ENCODE measurements at regions of chr13 and their contacts with region 1.

Region 1: DNA sequence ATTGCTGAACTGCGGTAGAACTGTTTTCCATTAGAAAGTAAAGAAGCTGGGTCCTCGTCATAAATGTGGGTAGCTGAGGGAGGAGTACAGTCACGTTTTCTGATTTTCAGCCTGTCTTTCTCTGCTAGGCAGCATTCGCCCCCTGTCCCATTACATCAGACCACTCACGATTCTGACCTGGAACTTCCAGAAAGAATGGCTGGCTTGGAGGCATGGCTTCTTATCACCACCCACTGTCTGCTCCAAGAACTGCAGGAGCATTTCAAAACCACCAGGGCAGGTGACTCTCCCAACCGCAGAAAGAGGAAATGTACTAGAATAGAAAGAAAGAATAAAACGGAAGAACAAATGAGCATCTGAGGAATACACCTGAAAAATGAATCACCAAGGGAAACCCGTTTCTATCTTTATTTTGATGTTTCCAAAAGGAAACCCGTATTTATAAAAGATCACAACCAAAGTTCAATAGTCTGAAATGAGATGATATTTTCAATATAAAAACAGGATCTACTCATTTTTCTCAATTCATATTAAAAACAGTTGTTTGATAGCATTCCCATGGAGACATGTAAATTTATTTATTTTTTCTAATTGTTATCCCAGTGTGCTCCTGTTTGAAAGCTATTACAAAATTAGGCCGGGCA is 22.1 kb upstream of the POMP start:
- DNase-seq: peak in 1 of 2 donors; percentile 71
- ATAC-seq: peak; percentile 65 to 86 (median 76)
- H3K4me3 ChIP-seq: no peak overlapping the region
- H3K27ac ChIP-seq: peak overlapping the region in 6 of 10 donors; percentile 29 to 63 (median 50)
- H3K4me1 ChIP-seq: peaks cover 0 to 43% (median 20%) of the 10 kb centered on the region in 9 donors
- H3K27me3 ChIP-seq: peaks cover 0 to 4% (median 0%) of the 10 kb centered on the region in 7 donors
- CTCF ChIP-seq: peak; percentile 72 to 95 (median 89)

Region 2: GRCh38 chr13:28329395-28330158 is 307.2 kb before region 1 on chr13:
- intact Hi-C with region 1: loop called in 9 of 10 experiments (anchors 1 to 5 kb)
- DNase-seq: peak in 1 of 2 donors; percentile 43
- ATAC-seq: peak; percentile 59 to 89 (median 74)
- H3K4me3 ChIP-seq: no peak overlapping the region
- H3K27ac ChIP-seq: peak overlapping the region in 7 of 10 donors; percentile 3 to 72 (median 33)
- H3K4me1 ChIP-seq: peaks cover 6 to 53% (median 28%) of the 10 kb centered on the region in 9 donors
- H3K27me3 ChIP-seq: peaks cover 0 to 21% (median 0%) of the 10 kb centered on the region in 7 donors
- CTCF ChIP-seq: no peak

Region 3: GRCh38 chr13:28401303-28402056 is 235.3 kb before region 1 on chr13:
- intact Hi-C with region 1: loop called in 1 of 10 experiments (anchors 10 kb)
- DNase-seq: no peak
- ATAC-seq: peak in 6 of 8 donors; percentile 28 to 83 (median 68)
- H3K4me3 ChIP-seq: peak overlapping the region in 1 of 10 donors; percentile 0
- H3K27ac ChIP-seq: peak overlapping the region in 7 of 10 donors; percentile 3 to 70 (median 52)
- H3K4me1 ChIP-seq: peaks cover 0 to 71% (median 28%) of the 10 kb centered on the region in 9 donors
- H3K27me3 ChIP-seq: no peaks in the 10 kb centered on the region
- CTCF ChIP-seq: no peak

Region 4: DNA sequence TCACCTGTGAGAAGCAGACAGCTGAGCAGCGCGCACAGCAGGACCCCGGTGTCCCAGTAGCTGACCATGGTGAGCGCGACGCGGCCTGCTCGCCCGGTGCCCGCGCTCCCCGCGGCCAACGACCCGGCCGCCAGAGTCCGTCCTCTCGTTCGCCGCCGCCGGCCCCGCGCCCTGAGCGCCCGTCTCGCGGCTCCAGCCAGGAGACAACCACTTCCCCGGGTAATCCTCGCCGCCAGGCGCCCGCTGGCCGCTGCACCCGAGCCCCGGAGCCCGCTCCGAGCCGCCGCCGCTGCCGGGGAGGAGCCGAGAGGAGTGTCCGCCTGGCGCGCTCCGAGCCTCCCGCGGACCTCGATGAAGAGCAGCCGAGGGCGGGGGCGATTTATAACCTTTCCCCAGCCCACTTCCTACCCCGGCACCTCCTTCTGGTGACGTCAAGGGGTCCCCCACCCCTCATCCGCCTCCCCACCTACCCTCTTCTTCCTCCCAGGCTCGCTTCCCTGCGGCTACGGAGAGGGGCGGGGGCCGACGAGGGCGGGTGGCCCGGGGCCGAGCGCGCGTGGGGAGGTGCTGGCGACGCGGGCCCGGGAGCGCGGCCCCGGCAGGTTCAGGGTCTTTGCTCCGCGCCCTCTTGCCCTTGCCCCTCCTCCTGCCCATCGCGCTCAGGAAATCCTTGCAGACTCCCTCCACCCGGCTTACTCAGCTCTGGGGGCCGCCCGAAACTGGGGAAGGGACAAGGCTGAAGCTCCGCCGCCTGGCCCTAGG is 141.8 kb before region 1 on chr13 and contains the start of gene FLT1:
- intact Hi-C with region 1: loop called in 3 of 10 experiments (anchors 2 to 10 kb)
- DNase-seq: peak; percentile 79 to 88
- ATAC-seq: peak; percentile 78 to 91 (median 84)
- H3K4me3 ChIP-seq: peak within 1 kb of the TSS; percentile 62 to 86 (median 74)
- H3K27ac ChIP-seq: peak within 1 kb of the TSS; percentile 85 to 98 (median 92)
- H3K4me1 ChIP-seq: peaks cover 0 to 61% (median 18%) of the 10 kb centered on the region in 9 donors
- H3K27me3 ChIP-seq: peaks cover 0 to 89% (median 59%) of the 10 kb centered on the region in 7 donors
- CTCF ChIP-seq: peak in 1 of 9 donors; percentile 7
- total RNA-seq, gene FLT1: 34.9 to 76.3 (median 47.2) TPM

Region 5: GRCh38 chr13:28531077-28531844 is 105.5 kb before region 1 on chr13:
- intact Hi-C with region 1: loop called in 5 of 10 experiments (anchors 2 to 10 kb)
- DNase-seq: peak; percentile 72 to 80
- ATAC-seq: peak; percentile 56 to 83 (median 72)
- H3K4me3 ChIP-seq: peak overlapping the region in 9 of 10 donors; percentile 43 to 65 (median 54)
- H3K27ac ChIP-seq: peak overlapping the region; percentile 53 to 91 (median 86)
- H3K4me1 ChIP-seq: peaks cover 0 to 43% (median 15%) of the 10 kb centered on the region in 9 donors
- H3K27me3 ChIP-seq: peaks cover 0 to 67% (median 20%) of the 10 kb centered on the region in 7 donors
- CTCF ChIP-seq: no peak

Region 6: GRCh38 chr13:28658796-28659620 is 22.2 kb after region 1 on chr13 and contains the start of gene POMP:
- intact Hi-C with region 1: loop called in 1 of 10 experiments (anchors 2 kb)
- DNase-seq: peak; percentile 96
- ATAC-seq: peak; percentile 96 to 99 (median 98)
- H3K4me3 ChIP-seq: peak within 1 kb of the TSS; percentile 74 to 95 (median 89)
- H3K27ac ChIP-seq: peak within 1 kb of the TSS; percentile 83 to 99 (median 98)
- H3K4me1 ChIP-seq: peaks cover 11 to 72% (median 51%) of the 10 kb centered on the region in 9 donors
- H3K27me3 ChIP-seq: no peaks in the 10 kb centered on the region
- CTCF ChIP-seq: no peak
- total RNA-seq, gene POMP: 91.7 to 120 (median 101) TPM

Measured in heart right ventricle (tissue), 16 donors.